ENCODE measurements at regions of chr12 and their contacts with region 1.

Region 1: GRCh38 chr12:13135371-13136178 is 32.1 kb upstream of the GSG1 start:
- DNase-seq: peak; percentile 94
- H3K4me3 Mint-ChIP-seq: peak overlapping the region; percentile 67
- H3K27ac Mint-ChIP-seq: peak overlapping the region; percentile 76
- H3K4me1 Mint-ChIP-seq: peaks cover 41% of the 10 kb centered on the region
- H3K27me3 Mint-ChIP-seq: no peaks in the 10 kb centered on the region
- CTCF ChIP-seq: peak; percentile 19

Region 2: DNA sequence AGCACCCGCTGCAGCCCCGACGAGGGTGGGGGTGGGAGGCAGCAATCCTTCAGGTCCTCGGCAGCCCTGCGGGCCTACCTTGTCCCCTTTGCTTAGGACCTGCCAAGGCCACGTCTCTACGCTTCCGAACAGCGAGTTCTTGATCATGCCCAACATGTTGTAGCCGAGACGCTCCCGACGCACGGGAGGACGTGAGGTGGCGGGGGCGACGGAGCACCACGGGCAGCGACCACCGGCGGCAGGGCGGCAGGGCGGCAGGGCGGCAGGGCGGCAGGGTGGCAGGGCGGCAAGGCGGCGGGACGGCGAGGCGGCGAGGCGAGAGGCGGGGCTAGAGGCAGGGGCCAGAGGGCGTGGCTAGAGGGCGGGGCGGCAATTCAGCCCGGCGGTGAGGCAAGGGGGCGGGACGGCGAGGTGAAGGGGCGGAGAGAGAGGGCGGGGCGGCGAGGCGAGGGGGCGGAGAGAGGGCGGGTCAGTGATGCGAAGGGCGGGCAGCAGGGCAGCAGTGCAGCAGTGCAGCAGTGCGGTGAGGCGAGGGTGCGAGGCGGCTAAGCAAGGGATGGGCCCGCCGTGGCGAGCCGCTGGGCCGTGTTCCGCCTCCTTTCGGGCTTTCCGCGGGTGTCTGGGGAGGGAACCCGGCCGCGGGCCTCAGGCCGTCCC is 135.5 kb before region 1 on chr12 and contains the start of gene HEBP1:
- CTCF ChIA-PET with region 1: no interaction called
- POLR2A ChIA-PET with region 1: interaction called, 3 read pairs
- intact Hi-C with region 1: loop called (anchors 1 kb)
- DNase-seq: peak; percentile 89
- H3K4me3 Mint-ChIP-seq: peak within 1 kb of the TSS; percentile 96
- H3K27ac Mint-ChIP-seq: peak within 1 kb of the TSS; percentile 84
- H3K4me1 Mint-ChIP-seq: peaks cover 33% of the 10 kb centered on the region
- H3K27me3 Mint-ChIP-seq: no peaks in the 10 kb centered on the region
- CTCF ChIP-seq: no peak
- total RNA-seq, gene HEBP1: 30.8 and 31.2 TPM in 2 replicates

Region 3: GRCh38 chr12:13154027-13154538 is 18.5 kb after region 1 on chr12:
- CTCF ChIA-PET with region 1: interaction called, 7 read pairs
- POLR2A ChIA-PET with region 1: interaction called, 22 read pairs
- intact Hi-C with region 1: no loop called
- DNase-seq: peak; percentile 47
- H3K4me3 Mint-ChIP-seq: peak overlapping the region; percentile 44
- H3K27ac Mint-ChIP-seq: peak overlapping the region; percentile 55
- H3K4me1 Mint-ChIP-seq: peaks cover 17% of the 10 kb centered on the region
- H3K27me3 Mint-ChIP-seq: no peaks in the 10 kb centered on the region
- CTCF ChIP-seq: no peak

Region 4: GRCh38 chr12:13173012-13173932 is 37.7 kb after region 1 on chr12:
- CTCF ChIA-PET with region 1: no interaction called
- POLR2A ChIA-PET with region 1: interaction called, 63 read pairs
- intact Hi-C with region 1: loop called (anchors 5 kb)
- DNase-seq: peak; percentile 80
- H3K4me3 Mint-ChIP-seq: peak overlapping the region; percentile 53
- H3K27ac Mint-ChIP-seq: peak overlapping the region; percentile 90
- H3K4me1 Mint-ChIP-seq: peaks cover 52% of the 10 kb centered on the region
- H3K27me3 Mint-ChIP-seq: no peaks in the 10 kb centered on the region
- CTCF ChIP-seq: no peak

Region 5: GRCh38 chr12:13196130-13196921 is 60.8 kb after region 1 on chr12 and contains the start of gene EMP1:
- CTCF ChIA-PET with region 1: interaction called, 5 read pairs
- POLR2A ChIA-PET with region 1: interaction called, 53 read pairs
- intact Hi-C with region 1: loop called (anchors 1 kb)
- DNase-seq: peak; percentile 99
- H3K4me3 Mint-ChIP-seq: peak within 1 kb of the TSS; percentile 79
- H3K27ac Mint-ChIP-seq: peak within 1 kb of the TSS; percentile 82
- H3K4me1 Mint-ChIP-seq: peaks cover 51% of the 10 kb centered on the region
- H3K27me3 Mint-ChIP-seq: no peaks in the 10 kb centered on the region
- CTCF ChIP-seq: no peak
- total RNA-seq, gene EMP1: 193 and 230 TPM in 2 replicates

Region 6: DNA sequence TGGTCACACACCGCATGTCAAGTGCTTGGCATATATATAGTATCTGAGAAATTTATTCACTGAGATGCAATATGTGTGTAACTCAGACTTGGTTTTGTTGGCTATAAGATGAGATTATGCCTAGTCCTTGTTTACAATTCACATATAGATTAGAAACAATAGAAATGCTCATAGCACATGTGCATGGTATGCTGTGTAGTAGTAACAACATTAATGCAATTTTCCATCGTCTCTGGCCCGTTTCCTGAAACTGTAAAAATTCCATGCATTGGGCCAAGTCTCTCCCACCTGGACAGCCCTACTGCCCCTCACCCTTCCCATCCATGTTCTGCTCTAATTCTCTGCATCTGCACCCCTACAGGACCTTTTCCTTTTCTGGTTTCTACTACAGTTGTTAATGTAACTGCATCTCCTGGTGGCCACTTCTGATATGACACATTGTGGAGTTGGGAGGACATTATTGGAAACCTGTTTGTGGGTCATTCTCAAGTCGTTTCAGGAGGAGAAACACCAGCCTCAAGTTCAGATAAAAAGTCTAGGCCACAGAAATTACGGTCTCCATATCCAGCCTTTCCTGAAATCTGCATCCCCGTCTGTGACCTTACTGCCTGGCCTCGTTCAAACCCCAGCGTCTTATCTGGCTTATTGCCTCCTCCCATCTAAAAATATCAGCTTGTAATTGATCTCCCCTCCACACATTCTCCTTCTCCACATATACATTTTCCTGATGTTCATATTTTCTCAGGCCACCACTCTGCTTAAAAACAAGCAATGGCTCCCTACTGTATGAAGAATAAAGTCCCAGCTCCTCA is 98.5 kb after region 1 on chr12:
- CTCF ChIA-PET with region 1: no interaction called
- POLR2A ChIA-PET with region 1: no interaction called
- intact Hi-C with region 1: no loop called
- DNase-seq: peak; percentile 77
- H3K4me3 Mint-ChIP-seq: no peak overlapping the region
- H3K27ac Mint-ChIP-seq: no peak overlapping the region
- H3K4me1 Mint-ChIP-seq: peaks cover 12% of the 10 kb centered on the region
- H3K27me3 Mint-ChIP-seq: no peaks in the 10 kb centered on the region
- CTCF ChIP-seq: peak; percentile 88

Measured in MCF 10A (cell line).